K562 (cell line): ENCODE measurements at regions of chr1 and their contacts with region 1.

Region 1: DNA sequence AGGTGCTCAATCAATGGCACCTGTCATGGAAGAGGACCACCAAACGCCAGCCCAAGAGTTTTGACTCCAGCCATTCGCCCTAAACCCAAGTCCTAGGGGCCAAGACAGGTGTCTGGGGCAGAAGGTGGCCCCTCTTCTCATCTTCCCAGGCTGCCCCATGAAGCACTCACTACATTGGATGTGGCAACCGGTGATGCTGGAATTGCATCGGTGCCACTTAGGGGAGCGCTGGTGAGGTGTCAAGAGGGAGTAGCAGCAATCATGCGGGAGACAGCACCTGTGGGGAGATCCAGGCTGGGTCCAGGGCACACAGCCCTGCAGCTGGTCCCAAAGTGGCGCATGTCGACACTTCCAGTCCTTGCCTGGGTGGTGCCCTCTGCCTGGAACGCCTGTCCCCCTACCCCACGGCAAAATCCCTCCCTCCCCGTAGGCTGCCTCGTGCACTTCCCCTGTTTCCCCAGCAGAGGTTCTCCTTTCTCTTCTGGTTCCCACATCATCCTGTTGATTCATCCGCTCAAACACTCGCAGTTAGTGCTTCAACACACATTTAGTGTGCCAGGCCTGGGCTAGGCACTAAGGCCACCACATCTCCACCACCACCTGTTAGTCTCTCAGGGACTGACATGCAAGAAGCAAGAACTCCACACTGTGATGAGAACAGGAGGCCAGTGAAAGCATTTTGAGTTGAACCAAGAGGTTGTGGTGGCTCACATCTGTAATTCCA is 18.5 kb downstream of the PLA2G2D start:
- DNase-seq: peak; percentile 43 to 64 (median 54)
- ATAC-seq: peak; percentile 96
- H3K4me3 ChIP-seq: no peak overlapping the region
- H3K27ac ChIP-seq: no peak overlapping the region
- H3K4me1 ChIP-seq: no peaks in the 10 kb centered on the region
- H3K27me3 ChIP-seq: peaks cover 3 to 15% of the 10 kb centered on the region in 2 experiments; a peak in 4 of 5 replicates
- CTCF ChIP-seq: peak; percentile 73 to 84 (median 80)
- EP300 ChIP-seq: no peak
- POLR2A ChIP-seq: no peak
- RAD21 ChIP-seq: peak; percentile 88 to 93

Region 2: DNA sequence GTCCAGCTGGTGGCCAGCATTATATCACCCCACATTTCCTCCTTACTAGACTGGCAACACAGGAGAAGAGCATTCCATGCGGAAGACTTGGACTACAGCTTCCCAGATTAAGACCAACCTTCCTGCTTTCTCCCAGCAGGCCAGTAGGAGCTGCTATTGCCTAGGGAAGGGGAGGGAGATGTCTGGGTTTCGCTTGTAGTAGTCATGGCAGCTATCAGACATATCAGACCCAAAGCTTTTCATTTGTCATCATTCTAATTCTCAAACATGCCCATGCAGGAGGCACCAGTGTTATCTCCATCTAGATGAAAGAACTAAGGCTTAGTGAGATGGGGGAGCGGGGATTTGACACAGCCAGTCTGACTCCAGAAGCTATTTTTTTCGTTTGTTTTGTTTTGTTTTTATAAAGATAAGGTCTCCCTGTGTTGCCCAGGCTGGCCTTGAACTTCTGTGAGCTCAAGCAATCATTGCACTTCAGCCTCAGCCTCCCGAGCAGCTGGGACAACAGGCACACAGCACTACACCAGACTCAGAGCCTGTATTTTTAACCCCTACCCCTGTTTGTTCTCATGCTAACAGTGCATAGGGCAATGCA is 125.9 kb before region 1 on chr1:
- CTCF ChIA-PET with region 1: no interaction called
- POLR2A ChIA-PET with region 1: no interaction called
- in situ Hi-C with region 1: no loop called
- intact Hi-C with region 1: loop called (anchors 5 kb)
- DNase-seq: peak; percentile 60 to 69 (median 63)
- ATAC-seq: peak; percentile 88
- H3K4me3 ChIP-seq: no peak overlapping the region
- H3K27ac ChIP-seq: no peak overlapping the region
- H3K4me1 ChIP-seq: no peaks in the 10 kb centered on the region
- H3K27me3 ChIP-seq: peaks cover 2 to 40% of the 10 kb centered on the region in 2 experiments; a peak in 3 of 5 replicates
- CTCF ChIP-seq: peak; percentile 84 to 96 (median 90)
- EP300 ChIP-seq: no peak
- POLR2A ChIP-seq: no peak
- RAD21 ChIP-seq: peak; percentile 95 to 99